ENCODE measurements at regions of chr16 and their contacts with region 1.

Region 1: GRCh38 chr16:57591086-57591869 is 37.2 kb upstream of the ADGRG1 start:
- DNase-seq: peak; percentile 90
- H3K4me3 ChIP-seq: peak overlapping the region in 1 of 3 experiments; percentile 0
- H3K27ac ChIP-seq: peak overlapping the region; percentile 40
- H3K4me1 ChIP-seq: peaks cover 19% of the 10 kb centered on the region
- H3K27me3 ChIP-seq: no peaks in the 10 kb centered on the region
- CTCF ChIP-seq: peak; percentile 89 to 97

Region 2: GRCh38 chr16:56137269-56137668 is 1454.0 kb before region 1 on chr16:
- CTCF ChIA-PET with region 1: no interaction called
- dilution Hi-C with region 1: no loop called
- in situ Hi-C with region 1: no loop called
- intact Hi-C with region 1: no loop called
- DNase-seq: no peak
- H3K4me3 ChIP-seq: no peak overlapping the region
- H3K27ac ChIP-seq: no peak overlapping the region
- H3K4me1 ChIP-seq: peaks cover 3% of the 10 kb centered on the region
- H3K27me3 ChIP-seq: peaks cover 8% of the 10 kb centered on the region
- CTCF ChIP-seq: no peak

Region 3: DNA sequence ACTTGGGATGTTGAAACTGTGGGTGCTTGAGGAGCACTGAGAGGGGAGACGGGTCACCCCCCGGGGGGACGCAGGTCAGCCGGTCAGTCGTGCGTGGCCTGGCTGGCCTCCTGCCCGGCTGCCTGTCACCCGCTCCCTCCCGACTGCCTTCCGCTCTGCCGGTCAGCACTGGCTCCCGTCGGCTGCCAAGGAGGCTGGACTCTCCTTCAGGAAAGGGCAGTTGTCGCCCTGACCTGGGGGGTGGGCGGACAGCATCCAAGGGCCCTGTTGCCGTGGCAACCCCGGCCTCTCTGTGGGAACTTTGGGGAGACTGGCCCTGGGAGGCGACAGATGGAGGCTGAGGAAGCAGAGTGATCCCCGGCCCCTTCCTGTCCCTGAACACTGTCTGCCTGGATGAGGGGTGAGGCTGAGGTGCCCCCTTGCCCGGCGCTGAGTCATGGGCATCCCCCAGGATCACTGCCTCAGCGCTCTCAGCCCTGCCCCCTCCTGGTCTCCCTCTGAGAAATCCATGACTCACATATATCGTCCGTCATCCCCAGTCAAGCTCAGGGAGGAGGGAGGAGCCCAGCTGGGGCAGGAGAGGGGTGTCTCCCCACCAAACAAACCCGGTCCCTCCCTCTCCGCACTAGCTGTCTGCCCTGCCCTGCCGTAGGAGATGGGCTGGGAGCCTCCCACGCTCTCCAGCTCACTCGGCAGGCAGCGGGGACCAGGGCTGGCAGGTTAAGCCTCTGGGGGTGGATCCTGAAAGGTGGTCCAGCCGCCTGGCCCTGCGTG is 36.9 kb after region 1 on chr16 and contains the start of gene ADGRG1:
- CTCF ChIA-PET with region 1: interaction called, 14 read pairs
- dilution Hi-C with region 1: no loop called
- in situ Hi-C with region 1: no loop called
- intact Hi-C with region 1: loop called (anchors 1 kb)
- DNase-seq: peak; percentile 98
- H3K4me3 ChIP-seq: peak within 1 kb of the TSS; percentile 14 to 73 (median 31)
- H3K27ac ChIP-seq: peak within 1 kb of the TSS; percentile 79
- H3K4me1 ChIP-seq: peaks cover 93% of the 10 kb centered on the region
- H3K27me3 ChIP-seq: no peaks in the 10 kb centered on the region
- CTCF ChIP-seq: peak in 1 of 2 donors; percentile 26
- total RNA-seq, gene ADGRG1: 195 to 196 TPM

Region 4: GRCh38 chr16:57648590-57649442 is 57.5 kb after region 1 on chr16:
- CTCF ChIA-PET with region 1: interaction called, 3 read pairs
- dilution Hi-C with region 1: loop called (anchors 5 kb)
- in situ Hi-C with region 1: loop called (anchors 5 kb)
- intact Hi-C with region 1: loop called (anchors 1 kb)
- DNase-seq: peak; percentile 70
- H3K4me3 ChIP-seq: no peak overlapping the region
- H3K27ac ChIP-seq: no peak overlapping the region
- H3K4me1 ChIP-seq: peaks cover 52% of the 10 kb centered on the region
- H3K27me3 ChIP-seq: no peaks in the 10 kb centered on the region
- CTCF ChIP-seq: peak; percentile 100

Region 5: GRCh38 chr16:57677622-57678369 is 86.5 kb after region 1 on chr16:
- CTCF ChIA-PET with region 1: no interaction called
- dilution Hi-C with region 1: no loop called
- in situ Hi-C with region 1: no loop called
- intact Hi-C with region 1: no loop called
- DNase-seq: no peak
- H3K4me3 ChIP-seq: no peak overlapping the region
- H3K27ac ChIP-seq: no peak overlapping the region
- H3K4me1 ChIP-seq: peaks cover 3% of the 10 kb centered on the region
- H3K27me3 ChIP-seq: peaks cover 1% of the 10 kb centered on the region
- CTCF ChIP-seq: no peak

Region 6: DNA sequence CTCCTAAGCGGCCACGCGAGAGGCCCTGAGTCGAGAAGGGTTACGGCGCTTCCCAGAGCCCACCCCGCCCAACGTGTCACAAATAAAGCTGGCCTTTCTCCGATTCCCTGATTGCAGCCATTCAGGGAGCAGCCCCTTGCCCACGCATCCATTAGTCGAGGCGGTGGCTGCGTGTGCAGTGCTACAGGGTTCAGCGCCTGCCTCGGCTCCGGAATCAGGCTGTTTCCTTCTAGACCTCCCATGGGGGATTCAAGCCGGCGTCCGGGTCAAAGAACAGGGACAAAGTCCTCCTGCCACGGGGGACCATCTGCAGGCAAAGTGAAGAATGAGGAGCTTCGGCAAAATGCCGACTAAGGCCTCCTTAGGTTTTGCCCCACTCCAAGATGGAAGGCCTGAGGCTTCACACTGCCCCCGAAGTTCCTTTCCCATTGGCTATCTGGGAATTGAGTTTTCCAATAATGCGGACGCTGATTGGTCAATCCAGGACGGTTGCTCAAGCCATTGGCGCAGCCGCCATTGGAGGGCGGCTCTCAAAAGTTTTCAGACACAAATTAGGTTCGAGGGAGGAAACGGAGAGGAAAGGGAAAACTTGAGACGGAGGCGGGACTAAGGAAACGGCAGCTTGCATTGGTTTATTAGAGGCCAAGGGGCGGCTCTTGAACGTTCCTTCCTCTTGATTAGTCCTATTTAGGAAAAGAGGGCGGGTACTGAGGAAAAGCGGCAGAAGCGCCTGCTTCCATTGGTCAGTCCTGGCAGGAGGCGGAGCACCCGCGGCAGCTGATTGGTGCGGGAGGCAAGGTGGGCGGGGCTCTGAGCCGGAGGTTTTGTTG is 143.9 kb after region 1 on chr16:
- CTCF ChIA-PET with region 1: interaction called, 4 read pairs
- dilution Hi-C with region 1: no loop called
- in situ Hi-C with region 1: no loop called
- intact Hi-C with region 1: loop called (anchors 5 kb)
- DNase-seq: peak; percentile 100
- H3K4me3 ChIP-seq: peak overlapping the region; percentile 84 to 100 (median 96)
- H3K27ac ChIP-seq: peak overlapping the region; percentile 89
- H3K4me1 ChIP-seq: peaks cover 13% of the 10 kb centered on the region
- H3K27me3 ChIP-seq: no peaks in the 10 kb centered on the region
- CTCF ChIP-seq: no peak

Region 7: GRCh38 chr16:57863434-57864160 is 272.3 kb after region 1 on chr16:
- CTCF ChIA-PET with region 1: no interaction called
- dilution Hi-C with region 1: no loop called
- in situ Hi-C with region 1: no loop called
- intact Hi-C with region 1: loop called (anchors 5 kb)
- DNase-seq: peak; percentile 45
- H3K4me3 ChIP-seq: no peak overlapping the region
- H3K27ac ChIP-seq: no peak overlapping the region
- H3K4me1 ChIP-seq: peaks cover 13% of the 10 kb centered on the region
- H3K27me3 ChIP-seq: no peaks in the 10 kb centered on the region
- CTCF ChIP-seq: peak; percentile 59 to 86

Region 8: GRCh38 chr16:57994778-57995177 is 403.5 kb after region 1 on chr16:
- CTCF ChIA-PET with region 1: no interaction called
- dilution Hi-C with region 1: no loop called
- in situ Hi-C with region 1: no loop called
- intact Hi-C with region 1: loop called (anchors 5 kb)
- DNase-seq: peak; percentile 22
- H3K4me3 ChIP-seq: no peak overlapping the region
- H3K27ac ChIP-seq: no peak overlapping the region
- H3K4me1 ChIP-seq: peaks cover 37% of the 10 kb centered on the region
- H3K27me3 ChIP-seq: no peaks in the 10 kb centered on the region
- CTCF ChIP-seq: peak; percentile 29 to 59